GM12878 (cell line): ENCODE measurements at regions of chr1 and their contacts with region 1.

Region 1: DNA sequence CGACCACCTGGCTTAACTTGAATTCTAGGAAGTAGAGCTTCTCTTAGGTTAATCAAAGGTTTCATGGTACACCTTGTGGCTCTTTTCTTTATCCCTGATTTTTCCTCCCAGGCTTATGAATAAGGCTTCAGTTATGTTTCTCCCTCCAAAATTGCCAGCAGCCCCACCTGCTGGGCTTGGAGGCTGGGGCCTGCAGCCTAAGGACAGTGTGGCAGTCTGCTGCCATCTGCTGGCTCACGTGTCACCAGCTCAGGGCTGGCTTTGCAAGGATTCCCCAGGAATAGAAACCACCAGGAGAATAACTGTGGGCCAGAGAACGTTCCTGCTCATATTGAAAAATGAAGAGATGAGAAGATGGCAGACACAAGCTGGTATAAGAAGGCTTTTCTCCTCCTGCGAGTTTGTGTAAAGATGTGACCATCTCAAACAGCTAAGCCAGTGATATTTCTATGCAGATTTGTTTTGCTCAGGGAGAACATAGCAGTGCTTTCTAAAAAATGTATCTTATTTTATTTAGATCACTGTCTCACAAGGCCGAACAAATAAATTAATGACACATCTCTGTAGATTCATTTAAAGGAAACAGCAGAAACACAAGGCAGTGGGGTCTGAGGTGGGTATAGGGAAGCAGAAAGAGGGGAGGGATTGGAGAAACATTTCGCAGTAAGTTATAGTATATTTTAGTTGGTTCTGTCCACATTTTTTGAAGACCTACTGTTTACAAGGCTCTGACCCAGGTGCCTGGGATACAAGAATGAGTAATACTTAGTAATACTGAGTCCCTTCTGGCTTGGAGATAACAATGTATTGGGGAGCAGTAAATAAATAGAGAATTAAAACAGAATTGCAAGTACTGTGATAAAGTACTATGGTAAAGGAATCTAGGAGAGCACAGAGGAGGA is 291.1 kb upstream of the SGIP1 start:
- DNase-seq: no peak
- ATAC-seq: peak; percentile 86
- H3K4me3 ChIP-seq: no peak overlapping the region
- H3K27ac ChIP-seq: no peak overlapping the region
- H3K4me1 ChIP-seq: peaks cover 7% of the 10 kb centered on the region
- H3K27me3 ChIP-seq: 0 out of 4 replicates have a peak, but pooled peaks cover 0 to 1% of the 10 kb centered on the region in 2 experiments
- CTCF ChIP-seq: peak; percentile 99 to 100 (median 99); a peak in 5 of 6 replicates
- EP300 ChIP-seq: no peak
- POLR2A ChIP-seq: no peak
- RAD21 ChIP-seq: peak; percentile 97

Region 2: DNA sequence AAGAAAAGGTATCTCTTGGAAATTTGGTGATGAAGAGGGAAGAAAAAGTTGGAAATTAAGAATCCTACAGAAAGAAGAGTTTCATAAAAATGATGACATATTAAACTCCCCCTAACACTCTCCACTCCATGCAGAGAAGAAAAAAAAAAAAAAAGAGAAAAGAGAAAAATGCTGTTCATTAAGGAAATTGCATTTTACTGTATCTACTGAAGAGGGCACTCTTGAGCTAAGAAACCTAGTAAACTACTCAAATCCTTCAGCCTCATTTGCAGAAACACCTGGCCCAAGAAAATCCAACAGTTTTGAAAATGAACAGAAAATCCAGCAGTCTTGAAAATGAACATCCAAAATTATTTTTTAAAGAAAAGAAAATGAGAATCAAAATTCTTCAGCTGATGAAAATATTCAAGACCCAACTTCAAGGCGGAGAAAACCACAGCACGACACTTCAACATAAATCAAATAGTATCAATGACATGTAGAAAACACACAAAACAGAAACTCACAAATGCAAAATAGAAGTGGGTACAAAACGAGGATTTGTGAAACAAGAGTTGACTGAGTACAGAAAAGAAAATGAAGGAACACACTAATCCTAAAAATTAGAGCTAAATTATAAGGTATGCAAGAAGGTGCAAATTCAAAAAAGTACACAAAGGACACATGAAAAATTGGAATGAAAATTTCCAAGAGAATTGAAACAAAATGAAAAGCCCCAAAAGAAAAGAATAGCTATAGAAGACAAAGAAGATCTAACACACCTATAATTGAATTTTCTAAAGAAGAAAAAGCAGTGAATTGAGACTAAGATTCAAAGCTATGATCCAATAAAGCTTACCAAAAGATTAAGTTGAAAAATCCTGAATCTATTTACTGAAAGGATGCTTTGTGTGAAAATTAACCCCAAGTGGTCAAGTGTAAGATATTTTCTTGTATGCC is 1006.8 kb before region 1 on chr1:
- CTCF ChIA-PET with region 1: interaction called, 6 read pairs
- POLR2A ChIA-PET with region 1: no interaction called
- RAD21 ChIA-PET with region 1: no interaction called
- SMC1A ChIA-PET with region 1: interaction called, 6 read pairs
- in situ Hi-C with region 1: loop called (anchors 10 kb)
- intact Hi-C with region 1: no loop called
- DNase-seq: no peak
- ATAC-seq: peak; percentile 41
- H3K4me3 ChIP-seq: no peak overlapping the region
- H3K27ac ChIP-seq: no peak overlapping the region
- H3K4me1 ChIP-seq: no peaks in the 10 kb centered on the region
- H3K27me3 ChIP-seq: no peaks in the 10 kb centered on the region
- CTCF ChIP-seq: peak; percentile 41 to 63 (median 56); a peak in 5 of 6 replicates
- EP300 ChIP-seq: no peak
- POLR2A ChIP-seq: no peak
- RAD21 ChIP-seq: peak; percentile 72

Region 3: DNA sequence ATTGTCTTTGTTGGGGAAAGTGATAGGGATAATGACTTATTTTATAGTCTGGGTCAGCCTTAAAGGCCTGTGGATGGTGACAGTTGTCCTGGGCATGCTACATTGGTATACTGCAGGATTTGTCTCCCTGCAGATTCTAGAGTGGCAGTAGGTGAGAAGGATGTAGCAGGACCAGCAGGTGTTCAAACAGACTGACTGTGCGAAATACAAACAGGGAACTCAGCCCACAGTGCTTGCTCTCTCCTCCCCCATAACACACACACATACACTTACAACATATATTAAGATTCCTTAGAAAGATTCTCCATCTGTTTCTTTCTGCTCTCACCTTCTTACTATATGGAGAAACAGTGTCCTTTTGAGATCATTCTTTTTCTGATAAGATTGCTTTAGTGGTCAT is 443.3 kb before region 1 on chr1:
- CTCF ChIA-PET with region 1: no interaction called
- POLR2A ChIA-PET with region 1: no interaction called
- RAD21 ChIA-PET with region 1: no interaction called
- SMC1A ChIA-PET with region 1: no interaction called
- in situ Hi-C with region 1: no loop called
- intact Hi-C with region 1: no loop called
- DNase-seq: no peak
- ATAC-seq: no peak
- H3K4me3 ChIP-seq: no peak overlapping the region
- H3K27ac ChIP-seq: no peak overlapping the region
- H3K4me1 ChIP-seq: no peaks in the 10 kb centered on the region
- H3K27me3 ChIP-seq: peaks cover 0 to 8% of the 10 kb centered on the region in 2 experiments; a peak in 1 of 4 replicates
- CTCF ChIP-seq: no peak
- EP300 ChIP-seq: no peak
- POLR2A ChIP-seq: no peak
- RAD21 ChIP-seq: no peak

Region 4: GRCh38 chr1:65952696-65953095 is 290.2 kb before region 1 on chr1:
- CTCF ChIA-PET with region 1: interaction called, 53 read pairs
- POLR2A ChIA-PET with region 1: no interaction called
- RAD21 ChIA-PET with region 1: interaction called, 17 read pairs
- SMC1A ChIA-PET with region 1: interaction called, 26 read pairs
- in situ Hi-C with region 1: loop called (anchors 5 kb)
- intact Hi-C with region 1: no loop called
- DNase-seq: no peak
- ATAC-seq: no peak
- H3K4me3 ChIP-seq: no peak overlapping the region
- H3K27ac ChIP-seq: no peak overlapping the region
- H3K4me1 ChIP-seq: no peaks in the 10 kb centered on the region
- H3K27me3 ChIP-seq: peaks cover 0 to 2% of the 10 kb centered on the region in 2 experiments; a peak in 1 of 4 replicates
- CTCF ChIP-seq: no peak
- EP300 ChIP-seq: no peak
- POLR2A ChIP-seq: no peak
- RAD21 ChIP-seq: no peak

Region 5: DNA sequence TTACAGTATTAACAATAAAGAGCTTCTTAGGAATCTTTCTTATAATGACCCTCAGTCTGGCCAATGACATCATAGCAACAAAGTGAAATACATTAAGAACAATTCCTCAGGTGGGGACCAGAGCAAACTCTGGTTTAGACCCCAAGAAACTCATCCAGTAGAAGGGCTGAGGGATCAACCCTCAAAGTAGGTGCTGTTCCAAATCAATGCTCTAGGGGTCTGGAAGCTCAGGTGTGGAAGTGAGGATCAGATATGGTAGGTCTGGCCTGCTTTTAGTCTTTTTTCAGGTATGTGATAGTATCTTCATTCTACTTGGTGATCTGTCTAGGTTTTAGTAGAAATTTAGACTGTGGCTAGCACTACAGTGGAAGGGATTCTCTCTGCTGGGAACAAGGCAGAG is 158.5 kb before region 1 on chr1:
- CTCF ChIA-PET with region 1: no interaction called
- POLR2A ChIA-PET with region 1: no interaction called
- RAD21 ChIA-PET with region 1: no interaction called
- SMC1A ChIA-PET with region 1: no interaction called
- in situ Hi-C with region 1: no loop called
- intact Hi-C with region 1: no loop called
- DNase-seq: no peak
- ATAC-seq: peak; percentile 51; the same call in 2 of the 3 replicates
- H3K4me3 ChIP-seq: no peak overlapping the region
- H3K27ac ChIP-seq: no peak overlapping the region
- H3K4me1 ChIP-seq: no peaks in the 10 kb centered on the region
- H3K27me3 ChIP-seq: no peaks in the 10 kb centered on the region
- CTCF ChIP-seq: peak in 2 of 3 experiments; percentile 17 to 18; a peak in 1 of 6 replicates
- EP300 ChIP-seq: no peak
- POLR2A ChIP-seq: no peak
- RAD21 ChIP-seq: no peak

Region 6: DNA sequence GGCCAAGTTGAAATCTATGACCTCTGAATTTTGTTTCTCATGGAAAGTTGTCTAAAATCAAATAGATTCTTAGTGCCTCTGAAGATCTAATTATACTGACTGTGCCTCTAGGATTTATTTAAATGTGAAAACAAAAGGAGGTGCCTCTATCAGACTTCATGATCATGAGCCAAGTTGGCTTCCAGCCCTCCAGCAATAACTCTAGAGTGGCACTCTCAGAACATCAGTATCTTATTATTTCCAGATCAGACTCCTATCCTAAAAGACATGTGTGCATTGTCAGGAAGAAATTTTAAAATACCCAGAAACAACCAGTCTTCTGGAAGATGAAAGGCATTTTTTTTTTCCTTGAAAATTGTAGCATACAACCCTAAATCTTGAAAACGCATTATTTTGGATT is 82.2 kb before region 1 on chr1:
- CTCF ChIA-PET with region 1: no interaction called
- POLR2A ChIA-PET with region 1: no interaction called
- RAD21 ChIA-PET with region 1: no interaction called
- SMC1A ChIA-PET with region 1: no interaction called
- in situ Hi-C with region 1: no loop called
- intact Hi-C with region 1: no loop called
- DNase-seq: no peak
- ATAC-seq: no peak
- H3K4me3 ChIP-seq: no peak overlapping the region
- H3K27ac ChIP-seq: no peak overlapping the region
- H3K4me1 ChIP-seq: no peaks in the 10 kb centered on the region
- H3K27me3 ChIP-seq: no peaks in the 10 kb centered on the region
- CTCF ChIP-seq: no peak
- EP300 ChIP-seq: no peak
- POLR2A ChIP-seq: no peak
- RAD21 ChIP-seq: no peak

Region 7: DNA sequence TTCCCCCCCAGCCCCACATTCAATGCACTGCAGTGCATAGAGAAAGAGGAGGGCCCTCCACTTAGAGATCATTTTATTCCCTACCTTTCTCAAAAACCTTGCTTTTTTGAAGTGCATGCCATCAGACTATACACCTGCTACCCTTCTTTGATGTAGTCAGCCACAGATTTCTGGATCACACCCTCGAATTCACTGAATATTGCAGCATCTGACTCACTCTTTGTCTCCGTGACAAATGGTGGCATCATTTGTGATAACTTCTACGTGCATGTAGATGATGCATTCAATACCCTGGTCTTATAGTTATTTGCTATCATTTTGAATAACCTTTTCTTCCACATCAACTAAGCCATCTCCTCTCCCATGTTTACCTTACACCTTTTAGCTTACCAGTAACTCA is 19.2 kb before region 1 on chr1:
- CTCF ChIA-PET with region 1: interaction called, 11 read pairs
- POLR2A ChIA-PET with region 1: no interaction called
- RAD21 ChIA-PET with region 1: no interaction called
- SMC1A ChIA-PET with region 1: interaction called, 6 read pairs
- in situ Hi-C with region 1: no loop called
- intact Hi-C with region 1: no loop called
- DNase-seq: no peak
- ATAC-seq: no peak
- H3K4me3 ChIP-seq: no peak overlapping the region
- H3K27ac ChIP-seq: no peak overlapping the region
- H3K4me1 ChIP-seq: no peaks in the 10 kb centered on the region
- H3K27me3 ChIP-seq: no peaks in the 10 kb centered on the region; a peak in 1 of 4 replicates
- CTCF ChIP-seq: no peak
- EP300 ChIP-seq: no peak
- POLR2A ChIP-seq: no peak
- RAD21 ChIP-seq: no peak

Region 8: GRCh38 chr1:66271216-66271903 is 28.5 kb after region 1 on chr1:
- CTCF ChIA-PET with region 1: interaction called, 12 read pairs
- POLR2A ChIA-PET with region 1: no interaction called
- RAD21 ChIA-PET with region 1: interaction called, 3 read pairs
- SMC1A ChIA-PET with region 1: interaction called, 5 read pairs
- in situ Hi-C with region 1: no loop called
- intact Hi-C with region 1: no loop called
- DNase-seq: no peak
- ATAC-seq: peak; percentile 58
- H3K4me3 ChIP-seq: no peak overlapping the region
- H3K27ac ChIP-seq: no peak overlapping the region
- H3K4me1 ChIP-seq: peaks cover 21% of the 10 kb centered on the region
- H3K27me3 ChIP-seq: no peaks in the 10 kb centered on the region
- CTCF ChIP-seq: no peak
- EP300 ChIP-seq: peak; percentile 38 to 77; a peak in 1 of 4 replicates
- POLR2A ChIP-seq: no peak
- RAD21 ChIP-seq: no peak

Region 9: DNA sequence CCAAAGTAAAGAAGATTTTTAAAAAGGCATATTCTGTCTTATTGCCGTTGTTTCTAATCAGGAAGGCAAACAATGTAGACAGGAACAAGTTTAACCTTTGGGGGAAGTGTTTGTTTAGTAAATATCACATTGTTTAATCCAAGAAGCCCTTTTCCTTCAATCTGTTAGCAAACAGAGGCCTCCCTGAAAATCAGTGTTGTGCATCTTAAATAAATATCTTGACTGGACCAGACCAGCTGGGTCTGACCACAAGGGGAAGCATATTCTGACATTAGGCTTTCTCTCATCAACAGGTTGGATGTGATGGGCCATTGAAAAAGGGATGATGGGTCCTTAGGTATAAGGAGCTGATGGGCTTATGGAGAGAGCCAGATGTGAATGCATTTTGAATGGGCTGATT is 209.3 kb after region 1 on chr1:
- CTCF ChIA-PET with region 1: interaction called, 595 read pairs
- POLR2A ChIA-PET with region 1: no interaction called
- RAD21 ChIA-PET with region 1: interaction called, 519 read pairs
- SMC1A ChIA-PET with region 1: interaction called, 663 read pairs
- in situ Hi-C with region 1: no loop called
- intact Hi-C with region 1: no loop called
- DNase-seq: no peak
- ATAC-seq: peak; percentile 25; the same call in 1 of the 3 replicates
- H3K4me3 ChIP-seq: no peak overlapping the region
- H3K27ac ChIP-seq: no peak overlapping the region
- H3K4me1 ChIP-seq: no peaks in the 10 kb centered on the region
- H3K27me3 ChIP-seq: no peaks in the 10 kb centered on the region
- CTCF ChIP-seq: no peak
- EP300 ChIP-seq: no peak
- POLR2A ChIP-seq: no peak
- RAD21 ChIP-seq: no peak